GM18951 (cell line): ENCODE measurements at regions of chrX and their contacts with region 1.

Region 1: DNA sequence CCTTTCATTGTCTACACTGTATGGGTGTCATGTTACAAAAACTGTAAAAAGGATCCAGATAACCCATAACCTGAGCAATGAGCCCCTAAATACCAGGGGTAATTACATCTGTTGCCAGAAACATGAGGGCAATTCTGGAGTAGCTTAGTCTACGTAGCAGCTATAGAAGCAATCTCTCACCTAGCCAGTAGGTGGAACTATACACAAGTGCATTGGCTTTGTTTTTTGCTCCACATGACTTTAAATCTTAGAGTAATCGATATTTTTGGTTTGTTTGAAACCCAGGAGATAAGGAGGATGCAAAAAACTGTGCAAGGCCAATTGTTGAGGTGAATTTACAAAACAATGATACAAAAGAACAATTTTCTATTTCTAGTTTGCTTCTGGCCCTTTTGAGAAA is 57.5 kb downstream of the GPR82 start:
- POLR2A ChIP-seq: no peak

Region 2: GRCh38 chrX:43557792-43558191 is 1776.3 kb after region 1 on chrX:
- in situ Hi-C with region 1: loop called (anchors 25 kb)
- POLR2A ChIP-seq: no peak